Mammary epithelial cell (primary cell): ENCODE measurements at regions of chr10 and their contacts with region 1.

Region 1: GRCh38 chr10:63083904-63084689 is 49.0 kb upstream of the NRBF2 start:
- DNase-seq: peak; percentile 68
- H3K4me3 ChIP-seq: no peak overlapping the region
- H3K27ac ChIP-seq: no peak overlapping the region
- H3K4me1 ChIP-seq: no peaks in the 10 kb centered on the region
- H3K27me3 ChIP-seq: no peaks in the 10 kb centered on the region
- CTCF ChIP-seq: peak; percentile 66 to 73

Region 2: DNA sequence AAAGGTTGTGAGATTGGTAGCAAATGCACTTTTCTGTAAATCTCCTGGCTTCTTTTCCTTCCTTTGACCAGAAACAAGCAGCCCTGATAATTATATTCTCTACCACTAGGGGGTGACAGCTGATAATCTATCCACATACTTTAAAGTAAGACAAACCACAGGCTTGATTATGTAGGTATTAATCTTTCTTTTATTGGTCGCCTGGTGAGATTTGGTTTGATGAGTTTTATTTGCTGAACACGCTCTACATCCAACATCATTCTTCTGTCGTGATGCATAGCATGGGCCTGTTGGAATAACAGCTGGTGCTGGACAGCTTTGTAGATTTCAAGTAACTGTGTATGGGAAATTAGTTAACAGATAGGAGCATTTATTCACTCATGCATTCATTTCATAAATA is 646.4 kb before region 1 on chr10:
- CTCF ChIA-PET with region 1: no interaction called
- dilution Hi-C with region 1: no loop called
- in situ Hi-C with region 1: no loop called
- intact Hi-C with region 1: loop called (anchors 5 kb)
- DNase-seq: peak; percentile 79
- H3K4me3 ChIP-seq: no peak overlapping the region
- H3K27ac ChIP-seq: no peak overlapping the region
- H3K4me1 ChIP-seq: peaks cover 21% of the 10 kb centered on the region
- H3K27me3 ChIP-seq: no peaks in the 10 kb centered on the region
- CTCF ChIP-seq: peak; percentile 70 to 71

Region 3: GRCh38 chr10:62554632-62555199 is 529.4 kb before region 1 on chr10:
- CTCF ChIA-PET with region 1: no interaction called
- dilution Hi-C with region 1: no loop called
- in situ Hi-C with region 1: no loop called
- intact Hi-C with region 1: loop called (anchors 1 kb)
- DNase-seq: peak; percentile 54
- H3K4me3 ChIP-seq: no peak overlapping the region
- H3K27ac ChIP-seq: no peak overlapping the region
- H3K4me1 ChIP-seq: peaks cover under 1% of the 10 kb centered on the region
- H3K27me3 ChIP-seq: no peaks in the 10 kb centered on the region
- CTCF ChIP-seq: peak; percentile 57 to 77

Region 4: DNA sequence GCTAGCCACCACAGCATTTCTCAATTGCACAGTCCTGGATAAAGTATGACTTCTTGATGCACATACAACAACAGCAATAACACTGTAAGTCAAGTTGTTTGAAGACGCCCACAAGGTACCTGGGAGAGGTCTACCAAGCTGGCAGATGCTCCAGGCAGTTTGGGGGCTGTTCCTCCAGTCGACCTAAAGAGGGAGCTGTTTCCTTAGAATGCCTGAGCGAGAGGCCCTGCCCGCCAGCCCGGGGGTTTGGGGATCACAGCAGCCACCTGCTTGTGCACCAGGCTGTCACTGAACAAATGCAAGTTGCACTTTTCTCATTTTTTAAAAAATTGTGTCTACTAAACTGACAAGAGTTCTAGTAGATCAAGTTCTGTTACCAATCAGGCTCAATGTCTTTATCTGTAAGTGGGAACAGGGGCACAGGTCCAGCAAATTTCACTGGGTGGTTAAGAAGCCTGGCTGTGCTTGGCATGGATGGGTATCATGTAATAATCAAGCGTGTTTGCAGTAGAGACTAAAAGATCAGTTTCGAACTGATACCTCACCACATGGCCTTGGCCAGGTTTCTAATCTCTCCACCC is 473.4 kb before region 1 on chr10:
- CTCF ChIA-PET with region 1: no interaction called
- dilution Hi-C with region 1: no loop called
- in situ Hi-C with region 1: loop called in 1 of 2 experiments (anchors 10 kb)
- intact Hi-C with region 1: loop called (anchors 1 kb)
- DNase-seq: peak; percentile 49
- H3K4me3 ChIP-seq: no peak overlapping the region
- H3K27ac ChIP-seq: no peak overlapping the region
- H3K4me1 ChIP-seq: peaks cover 7% of the 10 kb centered on the region
- H3K27me3 ChIP-seq: no peaks in the 10 kb centered on the region
- CTCF ChIP-seq: peak; percentile 88 to 96

Region 5: DNA sequence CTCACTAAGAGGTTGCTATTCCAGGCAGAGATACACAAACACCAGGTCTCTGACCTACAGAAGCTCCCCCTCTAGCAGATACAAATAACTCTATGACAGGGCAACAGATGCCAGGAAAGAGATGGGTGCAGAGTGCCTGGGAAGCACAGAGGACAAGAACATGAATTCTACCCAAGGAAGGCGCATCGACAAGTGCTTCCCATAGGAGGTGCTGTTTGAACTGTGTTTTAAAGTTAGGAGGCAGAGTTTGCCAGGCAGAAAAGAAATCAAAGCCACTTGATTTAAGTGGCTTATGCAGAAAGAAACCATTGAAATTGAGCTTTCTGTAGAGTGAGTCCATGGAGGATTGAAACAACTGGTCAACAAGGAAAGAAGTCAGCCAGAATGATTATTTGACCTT is 232.7 kb before region 1 on chr10:
- CTCF ChIA-PET with region 1: no interaction called
- dilution Hi-C with region 1: no loop called
- in situ Hi-C with region 1: no loop called
- intact Hi-C with region 1: loop called (anchors 5 kb)
- DNase-seq: no peak
- H3K4me3 ChIP-seq: no peak overlapping the region
- H3K27ac ChIP-seq: no peak overlapping the region
- H3K4me1 ChIP-seq: no peaks in the 10 kb centered on the region
- H3K27me3 ChIP-seq: no peaks in the 10 kb centered on the region
- CTCF ChIP-seq: peak; percentile 52 to 61

Region 6: GRCh38 chr10:63133056-63133820 is 49.1 kb after region 1 on chr10 and contains the start of gene NRBF2:
- CTCF ChIA-PET with region 1: interaction called, 3 read pairs
- dilution Hi-C with region 1: no loop called
- in situ Hi-C with region 1: no loop called
- intact Hi-C with region 1: loop called (anchors 2 kb)
- DNase-seq: peak; percentile 97
- H3K4me3 ChIP-seq: peak within 1 kb of the TSS; percentile 78 to 82 (median 81)
- H3K27ac ChIP-seq: peak within 1 kb of the TSS; percentile 83
- H3K4me1 ChIP-seq: peaks cover 12% of the 10 kb centered on the region
- H3K27me3 ChIP-seq: no peaks in the 10 kb centered on the region
- CTCF ChIP-seq: peak in 1 of 2 donors; percentile 36
- total RNA-seq, gene NRBF2: 32.5 to 45.8 TPM

Region 7: GRCh38 chr10:63829020-63829419 is 744.9 kb after region 1 on chr10:
- CTCF ChIA-PET with region 1: no interaction called
- dilution Hi-C with region 1: no loop called
- in situ Hi-C with region 1: no loop called
- intact Hi-C with region 1: no loop called
- DNase-seq: peak; percentile 39
- H3K4me3 ChIP-seq: no peak overlapping the region
- H3K27ac ChIP-seq: no peak overlapping the region
- H3K4me1 ChIP-seq: no peaks in the 10 kb centered on the region
- H3K27me3 ChIP-seq: no peaks in the 10 kb centered on the region
- CTCF ChIP-seq: no peak